ENCODE measurements at regions of chr16 and their contacts with region 1.

Region 1: DNA sequence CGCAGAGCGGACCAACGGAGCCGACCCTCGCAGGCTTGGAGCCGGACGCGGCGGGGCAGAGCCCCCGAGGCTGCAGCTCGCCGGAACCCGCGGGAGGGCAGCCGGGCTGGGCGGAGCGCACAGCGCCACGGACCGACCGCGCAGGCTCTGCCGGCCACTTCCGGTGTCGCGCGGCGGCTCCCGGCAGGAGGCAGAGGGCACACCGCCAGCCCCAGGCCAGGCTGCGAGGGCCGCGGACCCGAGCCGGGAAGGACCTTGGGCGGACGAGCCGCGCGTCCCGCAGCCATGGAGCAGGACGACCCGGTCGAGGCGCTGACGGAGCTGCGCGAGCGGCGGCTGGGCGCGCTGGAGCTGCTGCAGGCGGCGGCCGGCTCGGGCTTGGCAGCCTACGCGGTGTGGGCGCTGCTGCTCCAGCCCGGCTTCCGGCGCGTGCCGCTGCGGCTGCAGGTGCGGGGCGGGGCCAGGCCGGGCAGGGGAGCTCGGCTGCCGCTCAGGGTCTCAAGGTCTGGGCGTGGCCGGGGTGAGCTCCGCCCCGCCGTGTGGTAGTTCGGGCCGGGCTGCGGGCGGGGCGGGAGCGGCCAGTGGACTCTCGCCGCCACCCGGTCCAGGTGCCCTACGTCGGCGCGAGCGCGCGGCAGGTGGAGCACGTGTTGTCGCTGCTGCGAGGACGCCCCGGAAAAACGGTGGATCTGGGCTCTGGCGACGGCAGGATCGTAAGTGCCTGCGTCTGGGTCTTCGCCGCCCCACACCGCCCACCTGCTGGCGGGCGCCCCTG is at the start of gene ANTKMT:
- DNase-seq: peak; percentile 82
- H3K4me3 Mint-ChIP-seq: peak within 1 kb of the TSS; percentile 78
- H3K27ac Mint-ChIP-seq: peak within 1 kb of the TSS; percentile 59
- H3K4me1 Mint-ChIP-seq: peaks cover 9% of the 10 kb centered on the region
- H3K27me3 Mint-ChIP-seq: no peaks in the 10 kb centered on the region
- CTCF ChIP-seq: no peak
- total RNA-seq, gene ANTKMT: 54.7 and 55.8 TPM in 2 replicates

Region 2: DNA sequence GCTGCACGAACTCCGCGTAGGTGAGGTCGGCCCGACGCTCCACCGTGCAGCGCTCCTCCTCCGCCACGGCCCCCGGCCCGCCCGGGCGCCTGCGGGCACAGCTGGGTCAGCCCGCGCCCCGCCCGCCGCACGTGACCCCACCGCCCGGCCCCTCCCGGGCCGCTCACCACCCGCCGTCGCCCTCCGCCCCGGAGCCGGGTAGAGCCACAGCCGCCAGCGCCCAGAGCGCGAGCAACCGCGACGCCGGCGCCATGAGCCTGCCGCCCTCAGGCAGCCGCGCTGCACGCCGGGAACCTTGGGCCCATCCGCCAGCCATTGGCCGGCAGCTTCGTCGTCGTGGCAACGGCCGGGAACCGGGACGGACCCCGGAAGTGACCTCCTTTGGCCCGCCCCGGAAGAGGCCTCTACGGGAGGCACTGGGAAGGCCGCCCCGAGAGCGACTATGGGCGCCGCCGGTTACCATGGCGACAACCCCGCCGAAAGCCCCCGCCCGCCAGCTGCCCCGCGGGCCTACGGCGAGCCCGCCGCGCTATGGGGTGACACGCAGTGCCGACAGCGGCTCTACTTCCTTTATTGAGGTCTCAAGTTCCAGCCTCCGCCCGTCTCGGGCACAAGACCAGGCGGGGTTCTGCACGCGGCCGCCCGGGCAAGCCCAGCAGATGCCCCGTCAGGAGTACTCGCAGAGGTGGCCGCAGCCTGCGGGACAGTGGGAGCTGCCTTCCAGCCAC is 36.9 kb before region 1 on chr16 and contains the start of gene JMJD8:
- CTCF ChIA-PET with region 1: interaction called, 3 read pairs
- POLR2A ChIA-PET with region 1: interaction called, 25 read pairs
- intact Hi-C with region 1: no loop called
- DNase-seq: peak; percentile 95
- H3K4me3 Mint-ChIP-seq: peak within 1 kb of the TSS; percentile 76
- H3K27ac Mint-ChIP-seq: peak within 1 kb of the TSS; percentile 61
- H3K4me1 Mint-ChIP-seq: peaks cover 6% of the 10 kb centered on the region
- H3K27me3 Mint-ChIP-seq: no peaks in the 10 kb centered on the region
- CTCF ChIP-seq: no peak
- total RNA-seq, gene JMJD8: 23.6 and 33.4 TPM in 2 replicates

Region 3: GRCh38 chr16:695355-696089 is 25.7 kb before region 1 on chr16:
- CTCF ChIA-PET with region 1: interaction called, 3 read pairs
- POLR2A ChIA-PET with region 1: interaction called, 25 read pairs
- intact Hi-C with region 1: no loop called
- DNase-seq: peak; percentile 87
- H3K4me3 Mint-ChIP-seq: peak overlapping the region; percentile 41
- H3K27ac Mint-ChIP-seq: no peak overlapping the region
- H3K4me1 Mint-ChIP-seq: peaks cover 10% of the 10 kb centered on the region
- H3K27me3 Mint-ChIP-seq: no peaks in the 10 kb centered on the region
- CTCF ChIP-seq: no peak

Region 4: DNA sequence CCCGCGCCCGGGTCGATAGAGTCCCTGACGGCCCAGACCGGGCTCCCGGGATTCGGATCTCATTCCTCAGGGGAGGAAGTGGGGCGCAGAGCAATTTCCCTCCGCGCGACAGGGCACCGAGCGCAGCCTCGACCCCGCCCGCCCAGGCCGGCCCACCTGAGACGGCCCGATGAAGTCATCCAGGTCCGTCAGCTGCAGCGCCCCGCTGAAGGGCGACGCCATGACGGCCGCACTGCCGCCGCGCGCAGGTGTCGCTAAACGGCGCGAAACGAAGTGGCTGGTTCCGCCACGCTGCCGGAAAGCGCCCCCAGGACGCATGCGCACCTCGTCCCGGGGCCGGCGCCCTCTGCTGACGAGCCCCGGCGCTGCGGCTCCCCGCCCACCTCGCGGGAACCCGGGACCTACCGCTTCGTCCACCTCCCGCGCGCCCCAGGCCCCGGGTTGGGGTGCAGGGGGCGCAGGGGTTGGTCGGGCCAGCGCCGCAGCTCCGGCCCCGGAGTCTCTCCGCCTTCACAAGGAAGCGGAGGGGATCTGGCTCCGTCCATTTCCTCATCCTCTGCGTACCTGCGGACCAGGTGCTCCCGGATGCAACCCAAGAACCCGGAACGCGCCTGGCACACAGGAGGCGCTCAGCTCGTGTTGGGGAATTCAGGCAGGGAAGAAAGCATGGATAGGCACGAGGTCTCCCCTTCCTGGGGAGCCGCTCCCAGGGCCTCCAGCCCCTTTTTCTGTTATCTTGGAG is 19.8 kb after region 1 on chr16 and contains the start of gene CIAO3:
- CTCF ChIA-PET with region 1: interaction called, 3 read pairs
- POLR2A ChIA-PET with region 1: interaction called, 31 read pairs
- intact Hi-C with region 1: no loop called
- DNase-seq: peak; percentile 88
- H3K4me3 Mint-ChIP-seq: peak within 1 kb of the TSS; percentile 74
- H3K27ac Mint-ChIP-seq: peak within 1 kb of the TSS; percentile 84
- H3K4me1 Mint-ChIP-seq: peaks cover 6% of the 10 kb centered on the region
- H3K27me3 Mint-ChIP-seq: no peaks in the 10 kb centered on the region
- CTCF ChIP-seq: peak; percentile 96
- total RNA-seq, gene CIAO3: 28.5 and 31.1 TPM in 2 replicates

Region 5: GRCh38 chr16:782766-783403 is 61.7 kb after region 1 on chr16:
- CTCF ChIA-PET with region 1: interaction called, 7 read pairs
- POLR2A ChIA-PET with region 1: interaction called, 14 read pairs
- intact Hi-C with region 1: loop called (anchors 5 kb)
- DNase-seq: peak; percentile 64
- H3K4me3 Mint-ChIP-seq: peak overlapping the region; percentile 54
- H3K27ac Mint-ChIP-seq: no peak overlapping the region
- H3K4me1 Mint-ChIP-seq: peaks cover 9% of the 10 kb centered on the region
- H3K27me3 Mint-ChIP-seq: no peaks in the 10 kb centered on the region
- CTCF ChIP-seq: no peak

Region 6: DNA sequence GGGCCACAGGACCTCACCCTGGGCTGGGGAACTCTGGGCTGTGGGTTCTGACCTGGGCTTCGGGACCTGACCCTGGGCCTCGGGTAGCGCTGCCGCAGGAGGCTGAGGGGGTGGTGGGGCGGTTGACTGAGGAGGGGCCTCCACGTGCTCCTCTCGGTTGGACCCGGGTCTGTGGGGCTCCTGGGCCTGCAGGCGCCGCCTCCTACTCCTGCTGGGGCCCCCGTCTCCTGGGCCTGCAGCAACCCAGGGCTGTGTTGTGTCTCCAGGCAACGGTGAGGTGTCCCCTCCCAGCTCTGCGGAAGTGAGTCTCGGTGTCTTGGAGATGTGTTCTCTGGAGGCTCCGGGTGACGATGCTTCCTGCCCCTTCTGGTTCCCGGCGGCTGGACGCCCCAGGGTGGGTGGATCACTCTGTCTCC is 120.9 kb after region 1 on chr16:
- CTCF ChIA-PET with region 1: no interaction called
- POLR2A ChIA-PET with region 1: no interaction called
- intact Hi-C with region 1: no loop called
- DNase-seq: no peak
- H3K4me3 Mint-ChIP-seq: no peak overlapping the region
- H3K27ac Mint-ChIP-seq: no peak overlapping the region
- H3K4me1 Mint-ChIP-seq: no peaks in the 10 kb centered on the region
- H3K27me3 Mint-ChIP-seq: no peaks in the 10 kb centered on the region
- CTCF ChIP-seq: no peak